Activated B cell treated with CpG ODN at 0.5 μM for 24 hours (primary cell): ENCODE measurements at regions of chrX and their contacts with region 1.

Region 1: GRCh38 chrX:154308108-154308946 is 12.7 kb downstream of the TKTL1 start:
- DNase-seq: peak; percentile 52
- ATAC-seq: peak; percentile 90
- H3K4me3 Mint-ChIP-seq: no peak overlapping the region
- H3K27ac Mint-ChIP-seq: no peak overlapping the region
- H3K4me1 Mint-ChIP-seq: peaks cover 47% of the 10 kb centered on the region
- H3K27me3 Mint-ChIP-seq: no peaks in the 10 kb centered on the region
- CTCF ChIP-seq: no peak

Region 2: DNA sequence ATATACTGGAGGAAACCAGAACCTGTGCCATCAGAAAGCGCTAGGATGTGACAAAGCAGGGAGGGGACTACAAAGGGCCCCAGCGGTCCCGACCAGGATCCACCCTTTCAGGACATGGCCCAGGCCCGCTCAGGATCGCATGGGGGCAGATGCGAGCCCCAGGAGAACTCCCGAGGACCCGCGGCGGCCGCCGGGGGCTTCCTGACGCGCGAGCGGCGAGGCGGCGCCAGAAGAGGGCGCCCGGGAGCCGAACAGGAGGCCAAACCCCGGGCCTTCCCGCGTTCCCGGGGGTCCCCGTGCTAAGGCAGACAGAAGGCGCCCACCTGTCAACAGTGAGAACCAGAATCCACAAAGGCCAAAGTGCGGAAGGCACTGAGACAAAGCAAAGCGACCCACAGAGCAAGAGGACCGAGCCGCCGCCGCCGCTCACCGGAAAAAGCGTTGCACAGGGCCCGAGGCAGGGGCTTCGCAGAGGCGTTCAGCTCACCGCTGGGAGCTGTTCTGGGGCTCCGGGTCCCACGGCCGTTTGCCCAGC is 171.6 kb before region 1 on chrX:
- CTCF ChIA-PET with region 1: interaction called, 22 read pairs
- POLR2A ChIA-PET with region 1: no interaction called
- intact Hi-C with region 1: loop called (anchors 1 kb)
- DNase-seq: peak; percentile 71
- ATAC-seq: peak; percentile 90
- H3K4me3 Mint-ChIP-seq: peak overlapping the region; percentile 81
- H3K27ac Mint-ChIP-seq: peak overlapping the region; percentile 83
- H3K4me1 Mint-ChIP-seq: peaks cover 14% of the 10 kb centered on the region
- H3K27me3 Mint-ChIP-seq: no peaks in the 10 kb centered on the region
- CTCF ChIP-seq: no peak

Region 3: DNA sequence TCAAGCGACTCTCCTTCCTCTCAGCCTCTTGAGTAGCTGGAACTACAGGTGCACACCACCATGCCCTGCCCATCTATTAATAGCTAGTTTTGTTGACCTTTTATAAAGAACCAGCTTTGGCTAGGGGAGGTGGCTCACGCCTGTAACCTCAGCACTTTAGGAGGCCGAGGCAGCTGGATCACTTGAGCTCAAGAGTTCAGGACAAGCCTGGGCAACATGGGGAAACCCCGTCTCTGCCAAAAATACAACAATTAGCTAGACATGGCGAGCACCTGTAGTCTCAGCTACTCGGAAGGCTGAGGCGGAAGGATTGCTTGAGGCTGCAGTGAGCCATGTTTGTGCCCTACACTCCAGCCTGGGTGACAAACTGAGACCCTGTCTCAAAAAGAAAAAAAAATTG is 10.0 kb before region 1 on chrX:
- CTCF ChIA-PET with region 1: interaction called, 11 read pairs
- POLR2A ChIA-PET with region 1: no interaction called
- intact Hi-C with region 1: no loop called
- DNase-seq: no peak
- ATAC-seq: peak; percentile 86
- H3K4me3 Mint-ChIP-seq: no peak overlapping the region
- H3K27ac Mint-ChIP-seq: peak overlapping the region; percentile 53
- H3K4me1 Mint-ChIP-seq: peaks cover 23% of the 10 kb centered on the region
- H3K27me3 Mint-ChIP-seq: no peaks in the 10 kb centered on the region
- CTCF ChIP-seq: no peak

Region 4: DNA sequence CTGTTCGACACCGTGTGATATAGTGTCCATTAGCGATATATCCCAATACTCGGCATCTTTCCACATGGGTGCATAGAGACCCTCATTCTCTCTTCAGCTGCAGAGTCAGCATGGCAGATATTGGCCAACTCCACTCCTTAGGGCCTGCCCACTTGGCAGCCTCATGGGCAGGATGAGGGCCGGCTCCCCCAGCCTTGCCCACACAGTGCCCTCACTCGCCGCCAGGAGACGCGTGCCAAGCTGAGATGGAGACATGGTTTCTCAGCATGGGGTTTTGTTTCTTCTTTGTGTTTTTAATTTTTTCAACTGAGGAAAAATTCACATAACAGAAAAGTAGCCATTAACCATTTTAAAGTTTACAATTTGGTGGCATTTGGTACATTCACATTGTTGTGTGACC is 144.5 kb after region 1 on chrX:
- CTCF ChIA-PET with region 1: no interaction called
- POLR2A ChIA-PET with region 1: interaction called, 10 read pairs
- intact Hi-C with region 1: no loop called
- DNase-seq: no peak
- ATAC-seq: no peak
- H3K4me3 Mint-ChIP-seq: no peak overlapping the region
- H3K27ac Mint-ChIP-seq: no peak overlapping the region
- H3K4me1 Mint-ChIP-seq: peaks cover 5% of the 10 kb centered on the region
- H3K27me3 Mint-ChIP-seq: no peaks in the 10 kb centered on the region
- CTCF ChIP-seq: no peak